CD4-positive, alpha-beta T cell (primary cell): ENCODE measurements at regions of chr4 and their contacts with region 1.

Region 1: GRCh38 chr4:169010125-169011023 is at the start of gene CBR4:
- DNase-seq: peak; percentile 90 to 99 (median 94)
- ATAC-seq: peak; percentile 92
- H3K4me3 ChIP-seq: peak within 1 kb of the TSS; percentile 89
- H3K4me3 Mint-ChIP-seq: peak within 1 kb of the TSS; percentile 95
- H3K27ac ChIP-seq: peak within 1 kb of the TSS; percentile 89 to 92
- H3K27ac Mint-ChIP-seq: peak within 1 kb of the TSS; percentile 94
- H3K4me1 ChIP-seq: peaks cover 16% of the 10 kb centered on the region
- H3K4me1 Mint-ChIP-seq: peaks cover 39% of the 10 kb centered on the region
- H3K27me3 ChIP-seq: no peaks in the 10 kb centered on the region
- H3K27me3 Mint-ChIP-seq: peaks cover 4% of the 10 kb centered on the region
- CTCF ChIP-seq: peak; percentile 56
- total RNA-seq, gene CBR4: 5.1 to 5.4 TPM

Region 2: GRCh38 chr4:168475745-168476144 is 534.6 kb before region 1 on chr4:
- CTCF ChIA-PET with region 1: no interaction called
- POLR2A ChIA-PET with region 1: interaction called, 10 read pairs
- intact Hi-C with region 1: loop called (anchors 2 to 10 kb)
- DNase-seq: peak in 5 of 14 experiments; percentile 4 to 49 (median 19)
- ATAC-seq: no peak
- H3K4me3 ChIP-seq: no peak overlapping the region
- H3K4me3 Mint-ChIP-seq: no peak overlapping the region
- H3K27ac ChIP-seq: no peak overlapping the region
- H3K27ac Mint-ChIP-seq: peak overlapping the region; percentile 56
- H3K4me1 ChIP-seq: peaks cover 16% of the 10 kb centered on the region
- H3K4me1 Mint-ChIP-seq: peaks cover 74% of the 10 kb centered on the region
- H3K27me3 ChIP-seq: no peaks in the 10 kb centered on the region
- H3K27me3 Mint-ChIP-seq: no peaks in the 10 kb centered on the region
- CTCF ChIP-seq: no peak

Region 3: GRCh38 chr4:168514249-168514852 is 496.0 kb before region 1 on chr4:
- CTCF ChIA-PET with region 1: no interaction called
- POLR2A ChIA-PET with region 1: no interaction called
- intact Hi-C with region 1: loop called in 1 of 2 experiments (anchors 5 kb)
- DNase-seq: peak in 3 of 14 experiments; percentile 48 to 58 (median 55)
- ATAC-seq: no peak
- H3K4me3 ChIP-seq: no peak overlapping the region
- H3K4me3 Mint-ChIP-seq: no peak overlapping the region
- H3K27ac ChIP-seq: no peak overlapping the region
- H3K27ac Mint-ChIP-seq: no peak overlapping the region
- H3K4me1 ChIP-seq: peaks cover 20% of the 10 kb centered on the region
- H3K4me1 Mint-ChIP-seq: peaks cover 35% of the 10 kb centered on the region
- H3K27me3 ChIP-seq: no peaks in the 10 kb centered on the region
- H3K27me3 Mint-ChIP-seq: no peaks in the 10 kb centered on the region
- CTCF ChIP-seq: peak; percentile 77

Region 4: GRCh38 chr4:168758351-168758876 is 252.0 kb before region 1 on chr4:
- CTCF ChIA-PET with region 1: no interaction called
- POLR2A ChIA-PET with region 1: no interaction called
- intact Hi-C with region 1: no loop called
- DNase-seq: no peak
- ATAC-seq: no peak
- H3K4me3 ChIP-seq: no peak overlapping the region
- H3K4me3 Mint-ChIP-seq: no peak overlapping the region
- H3K27ac ChIP-seq: no peak overlapping the region
- H3K27ac Mint-ChIP-seq: no peak overlapping the region
- H3K4me1 ChIP-seq: no peaks in the 10 kb centered on the region
- H3K4me1 Mint-ChIP-seq: peaks cover 4% of the 10 kb centered on the region
- H3K27me3 ChIP-seq: no peaks in the 10 kb centered on the region
- H3K27me3 Mint-ChIP-seq: peaks cover 6% of the 10 kb centered on the region
- CTCF ChIP-seq: no peak

Region 5: DNA sequence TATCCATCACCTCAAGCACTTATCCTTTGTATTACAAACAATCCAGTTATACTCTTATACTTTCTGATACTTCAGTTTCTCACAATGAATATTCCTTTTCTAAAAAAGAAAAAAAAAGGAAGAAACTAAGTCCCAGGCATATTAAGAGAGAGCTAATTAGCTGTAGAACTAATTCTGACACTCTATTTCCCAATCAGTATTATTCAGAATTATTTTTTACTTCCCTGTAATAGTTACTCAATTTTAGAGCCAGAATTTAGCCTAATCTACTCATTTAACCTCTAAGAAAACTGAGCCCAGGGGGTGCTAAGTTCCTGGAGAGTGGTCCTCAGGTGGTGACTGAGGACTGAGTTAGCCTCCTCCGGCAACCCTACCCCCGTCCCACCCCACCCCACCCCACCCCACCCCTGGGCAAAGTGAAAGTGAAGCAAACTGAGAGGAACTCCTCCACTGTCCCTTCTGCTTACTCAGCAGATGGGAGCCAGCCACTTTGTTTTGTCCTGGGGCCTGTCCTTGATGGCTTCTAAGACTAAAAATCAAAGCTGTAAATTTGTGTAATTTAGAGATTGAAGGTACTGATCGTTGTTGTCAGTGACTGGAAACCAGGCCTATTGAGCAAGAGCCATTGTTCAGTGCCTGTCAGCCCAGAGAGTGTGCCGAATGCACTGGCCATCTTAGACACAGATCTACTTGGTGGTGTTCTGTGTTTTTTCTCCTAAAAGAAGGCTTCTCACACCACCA is 162.4 kb before region 1 on chr4:
- CTCF ChIA-PET with region 1: no interaction called
- POLR2A ChIA-PET with region 1: no interaction called
- intact Hi-C with region 1: no loop called
- DNase-seq: peak in 1 of 14 experiments; percentile 2
- ATAC-seq: no peak
- H3K4me3 ChIP-seq: no peak overlapping the region
- H3K4me3 Mint-ChIP-seq: no peak overlapping the region
- H3K27ac ChIP-seq: no peak overlapping the region
- H3K27ac Mint-ChIP-seq: no peak overlapping the region
- H3K4me1 ChIP-seq: no peaks in the 10 kb centered on the region
- H3K4me1 Mint-ChIP-seq: peaks cover 9% of the 10 kb centered on the region
- H3K27me3 ChIP-seq: peaks cover 2 to 9% of the 10 kb centered on the region in 2 experiments
- H3K27me3 Mint-ChIP-seq: peaks cover 6% of the 10 kb centered on the region
- CTCF ChIP-seq: no peak

Region 6: DNA sequence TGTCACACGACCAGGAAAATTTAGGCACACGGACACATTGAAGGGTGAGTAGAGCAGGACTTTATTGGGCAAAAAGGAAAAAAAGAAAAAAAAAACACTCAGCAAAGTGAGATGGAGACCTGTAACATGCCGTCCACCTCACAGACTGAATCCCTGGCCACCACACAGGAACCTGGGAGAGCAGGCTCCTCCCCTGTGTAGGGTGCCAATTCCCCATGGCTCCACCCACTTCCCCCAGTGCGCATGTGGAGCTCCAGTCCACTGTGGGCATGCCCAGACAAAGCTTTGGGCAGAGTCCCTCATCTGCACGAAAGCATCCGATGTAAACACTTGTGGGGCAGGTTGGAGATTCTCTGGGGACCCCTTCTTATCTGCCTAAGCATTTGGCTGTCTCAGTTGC is 23.3 kb after region 1 on chr4:
- CTCF ChIA-PET with region 1: no interaction called
- POLR2A ChIA-PET with region 1: no interaction called
- intact Hi-C with region 1: no loop called
- DNase-seq: no peak
- ATAC-seq: no peak
- H3K4me3 ChIP-seq: no peak overlapping the region
- H3K4me3 Mint-ChIP-seq: no peak overlapping the region
- H3K27ac ChIP-seq: no peak overlapping the region
- H3K27ac Mint-ChIP-seq: no peak overlapping the region
- H3K4me1 ChIP-seq: no peaks in the 10 kb centered on the region
- H3K4me1 Mint-ChIP-seq: no peaks in the 10 kb centered on the region
- H3K27me3 ChIP-seq: no peaks in the 10 kb centered on the region
- H3K27me3 Mint-ChIP-seq: no peaks in the 10 kb centered on the region
- CTCF ChIP-seq: no peak

Region 7: GRCh38 chr4:169410839-169411770 is 400.7 kb after region 1 on chr4:
- CTCF ChIA-PET with region 1: no interaction called
- POLR2A ChIA-PET with region 1: interaction called, 11 read pairs
- intact Hi-C with region 1: no loop called
- DNase-seq: peak; percentile 5 to 84 (median 32)
- ATAC-seq: peak; percentile 99
- H3K4me3 ChIP-seq: no peak overlapping the region
- H3K4me3 Mint-ChIP-seq: peak overlapping the region; percentile 39
- H3K27ac ChIP-seq: peak overlapping the region in 1 of 2 donors; percentile 54
- H3K27ac Mint-ChIP-seq: peak overlapping the region; percentile 65
- H3K4me1 ChIP-seq: peaks cover 9% of the 10 kb centered on the region
- H3K4me1 Mint-ChIP-seq: peaks cover 31% of the 10 kb centered on the region
- H3K27me3 ChIP-seq: no peaks in the 10 kb centered on the region
- H3K27me3 Mint-ChIP-seq: no peaks in the 10 kb centered on the region
- CTCF ChIP-seq: no peak

Region 8: DNA sequence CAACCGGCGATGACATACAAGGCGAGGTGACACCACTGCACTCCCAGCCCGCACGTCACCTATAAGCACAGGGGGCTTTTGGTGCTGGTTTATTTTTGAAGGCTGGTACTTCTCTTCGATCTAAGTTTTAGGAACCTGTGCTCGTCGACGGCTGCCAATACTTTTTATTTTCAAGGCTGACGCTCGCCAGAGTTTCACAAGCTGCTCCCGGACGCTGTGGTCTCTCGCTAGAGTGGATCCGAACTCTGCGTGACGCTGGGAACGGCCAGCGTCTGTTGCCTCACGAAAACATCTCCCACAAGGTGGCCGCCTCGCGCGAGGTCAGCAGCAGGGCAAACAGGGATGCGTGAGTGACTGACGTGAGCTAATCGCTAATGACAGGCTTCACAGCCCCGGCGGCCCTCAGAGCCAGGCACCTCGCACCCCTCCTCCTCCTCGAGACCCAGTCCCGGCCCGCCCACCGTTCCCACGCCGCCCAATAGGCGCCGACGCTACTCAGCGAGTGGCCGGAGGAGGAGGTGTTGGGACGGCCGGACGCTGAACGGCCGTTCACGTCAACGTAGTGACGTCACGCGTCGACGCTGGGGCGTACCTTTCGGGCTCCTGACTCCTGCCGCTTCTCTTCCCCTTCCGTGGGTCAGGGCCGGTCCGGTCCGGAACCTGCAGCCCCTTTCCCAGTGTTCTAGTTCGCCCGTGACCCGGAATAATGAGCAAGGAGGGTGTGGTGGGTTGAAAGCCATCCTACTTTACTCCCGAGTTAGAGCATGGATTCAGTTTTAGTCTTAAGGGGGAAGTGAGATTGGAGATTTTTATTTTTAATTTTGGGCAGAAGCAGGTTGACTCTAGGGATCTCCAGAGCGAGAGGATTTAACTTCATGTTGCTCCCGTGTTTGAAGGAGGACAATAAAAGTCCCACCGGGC is 609.8 kb after region 1 on chr4 and contains the start of gene CLCN3:
- CTCF ChIA-PET with region 1: interaction called, 5 read pairs
- POLR2A ChIA-PET with region 1: interaction called, 19 read pairs
- intact Hi-C with region 1: no loop called
- DNase-seq: peak; percentile 72 to 94 (median 87)
- ATAC-seq: peak; percentile 65
- H3K4me3 ChIP-seq: peak within 1 kb of the TSS; percentile 91
- H3K4me3 Mint-ChIP-seq: peak within 1 kb of the TSS; percentile 98
- H3K27ac ChIP-seq: peak within 1 kb of the TSS; percentile 94 to 96
- H3K27ac Mint-ChIP-seq: peak within 1 kb of the TSS; percentile 98
- H3K4me1 ChIP-seq: peaks cover 19% of the 10 kb centered on the region
- H3K4me1 Mint-ChIP-seq: peaks cover 74% of the 10 kb centered on the region
- H3K27me3 ChIP-seq: no peaks in the 10 kb centered on the region
- H3K27me3 Mint-ChIP-seq: no peaks in the 10 kb centered on the region
- CTCF ChIP-seq: no peak
- total RNA-seq, gene CLCN3: 9.0 to 9.2 TPM

Region 9: GRCh38 chr4:170027181-170027829 is 1016.9 kb after region 1 on chr4:
- CTCF ChIA-PET with region 1: no interaction called
- POLR2A ChIA-PET with region 1: interaction called, 3 read pairs
- intact Hi-C with region 1: loop called (anchors 2 to 5 kb)
- DNase-seq: peak; percentile 74 to 95 (median 86)
- ATAC-seq: peak; percentile 77
- H3K4me3 ChIP-seq: peak overlapping the region; percentile 87
- H3K4me3 Mint-ChIP-seq: peak overlapping the region; percentile 94
- H3K27ac ChIP-seq: no peak overlapping the region
- H3K27ac Mint-ChIP-seq: peak overlapping the region; percentile 70
- H3K4me1 ChIP-seq: peaks cover 19% of the 10 kb centered on the region
- H3K4me1 Mint-ChIP-seq: peaks cover 9% of the 10 kb centered on the region
- H3K27me3 ChIP-seq: peaks cover 0 to 14% of the 10 kb centered on the region in 2 experiments
- H3K27me3 Mint-ChIP-seq: peaks cover 22% of the 10 kb centered on the region
- CTCF ChIP-seq: no peak